ENCODE measurements at regions of chr6 and their contacts with region 1.

Region 1: GRCh38 chr6:143529095-143529494 is 17.6 kb upstream of the FUCA2 start:
- DNase-seq: no peak
- ATAC-seq: peak; percentile 47
- H3K4me3 ChIP-seq: no peak overlapping the region
- H3K4me3 Mint-ChIP-seq: peak overlapping the region in 1 of 10 donors; percentile 16
- H3K27ac ChIP-seq: no peak overlapping the region
- H3K27ac Mint-ChIP-seq: peak overlapping the region; percentile 44 to 95 (median 92)
- H3K4me1 ChIP-seq: peaks cover 14 to 15% of the 10 kb centered on the region in 2 donors
- H3K4me1 Mint-ChIP-seq: peaks cover 13 to 19% (median 15%) of the 10 kb centered on the region in 7 donors
- H3K27me3 ChIP-seq: no peaks in the 10 kb centered on the region
- H3K27me3 Mint-ChIP-seq: no peaks in the 10 kb centered on the region

Region 2: DNA sequence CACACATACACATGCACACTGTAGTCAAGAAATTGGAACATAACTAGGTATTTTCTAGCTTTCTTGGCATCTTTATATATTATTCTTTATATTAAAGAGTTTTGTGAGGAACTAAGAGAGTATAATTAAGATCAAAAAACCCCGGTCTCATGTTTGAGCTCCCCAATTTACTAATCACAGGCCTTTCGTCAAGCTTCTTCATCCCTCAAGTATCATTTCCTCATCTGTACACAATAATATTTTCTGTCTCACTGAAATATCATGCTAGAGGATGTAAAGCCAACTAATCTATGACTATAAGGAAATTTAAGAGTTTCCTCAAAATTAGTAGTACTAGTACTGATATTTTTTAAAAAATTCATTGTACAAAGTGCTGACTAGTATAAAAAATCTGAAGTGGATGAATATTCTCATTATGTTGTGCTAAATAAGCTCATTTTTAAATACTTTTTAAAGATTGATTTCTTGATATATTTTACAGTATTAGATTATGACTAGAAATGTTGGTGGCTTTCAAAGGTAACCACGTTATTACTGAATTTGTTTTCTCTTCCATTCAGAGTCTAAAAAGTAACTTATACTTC is 50.5 kb before region 1 on chr6:
- CTCF ChIA-PET with region 1: no interaction called
- POLR2A ChIA-PET with region 1: no interaction called
- intact Hi-C with region 1: no loop called
- DNase-seq: no peak
- ATAC-seq: no peak
- H3K4me3 ChIP-seq: no peak overlapping the region
- H3K4me3 Mint-ChIP-seq: no peak overlapping the region
- H3K27ac ChIP-seq: no peak overlapping the region
- H3K27ac Mint-ChIP-seq: no peak overlapping the region
- H3K4me1 ChIP-seq: no peaks in the 10 kb centered on the region
- H3K4me1 Mint-ChIP-seq: no peaks in the 10 kb centered on the region
- H3K27me3 ChIP-seq: no peaks in the 10 kb centered on the region
- H3K27me3 Mint-ChIP-seq: no peaks in the 10 kb centered on the region

Region 3: DNA sequence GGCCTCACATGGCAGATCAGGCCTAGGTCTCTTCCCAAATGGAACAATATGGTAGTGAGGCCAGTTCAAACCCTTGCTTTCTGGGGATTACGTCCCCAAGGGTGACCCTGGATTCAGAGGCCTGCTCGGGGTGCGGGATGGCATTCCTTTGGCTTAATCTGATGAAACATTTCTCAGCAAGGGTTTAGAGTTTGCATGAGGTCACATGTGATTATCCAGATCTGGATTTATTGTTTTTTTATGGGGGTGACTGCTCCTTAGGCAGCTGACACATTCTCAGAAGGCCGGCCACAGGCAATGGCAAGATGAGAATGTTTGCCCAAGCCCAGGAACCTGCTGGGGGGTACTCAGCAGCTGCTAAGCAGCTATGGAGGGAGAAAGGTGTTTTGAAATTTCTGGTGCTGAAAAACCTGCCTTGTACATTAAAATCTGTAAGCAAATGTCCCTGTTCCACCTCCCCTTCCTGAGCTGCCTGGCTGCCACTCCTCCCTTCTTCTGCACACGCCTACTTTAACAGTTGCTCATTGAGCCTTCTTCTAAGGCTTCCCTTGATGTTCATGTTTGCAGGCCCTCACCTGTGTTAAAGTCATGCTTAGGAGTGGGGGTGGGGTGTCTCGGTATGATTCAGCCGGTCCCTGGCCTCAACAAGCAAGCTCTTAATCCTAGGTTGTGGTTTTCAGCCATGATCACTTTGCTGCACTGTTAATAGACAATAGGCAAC is 20.3 kb after region 1 on chr6:
- CTCF ChIA-PET with region 1: interaction called, 3 read pairs
- POLR2A ChIA-PET with region 1: no interaction called
- intact Hi-C with region 1: loop called in 1 of 2 experiments (anchors 2 kb)
- DNase-seq: peak in 1 of 9 donors; percentile 45
- ATAC-seq: peak; percentile 47
- H3K4me3 ChIP-seq: no peak overlapping the region
- H3K4me3 Mint-ChIP-seq: peak overlapping the region in 3 of 10 donors; percentile 4 to 43 (median 10)
- H3K27ac ChIP-seq: no peak overlapping the region
- H3K27ac Mint-ChIP-seq: peak overlapping the region in 4 of 9 donors; percentile 20 to 66 (median 66)
- H3K4me1 ChIP-seq: peaks cover 43 to 71% of the 10 kb centered on the region in 2 donors
- H3K4me1 Mint-ChIP-seq: peaks cover 37 to 86% (median 73%) of the 10 kb centered on the region in 7 donors
- H3K27me3 ChIP-seq: no peaks in the 10 kb centered on the region
- H3K27me3 Mint-ChIP-seq: no peaks in the 10 kb centered on the region

Region 4: GRCh38 chr6:144013486-144013909 is 484.4 kb after region 1 on chr6:
- CTCF ChIA-PET with region 1: no interaction called
- POLR2A ChIA-PET with region 1: no interaction called
- intact Hi-C with region 1: loop called in 1 of 2 experiments (anchors 1 kb)
- DNase-seq: peak; percentile 18 to 58 (median 45)
- ATAC-seq: peak; percentile 54
- H3K4me3 ChIP-seq: no peak overlapping the region
- H3K4me3 Mint-ChIP-seq: no peak overlapping the region
- H3K27ac ChIP-seq: no peak overlapping the region
- H3K27ac Mint-ChIP-seq: peak overlapping the region in 1 of 9 donors; percentile 9
- H3K4me1 ChIP-seq: no peaks in the 10 kb centered on the region
- H3K4me1 Mint-ChIP-seq: peaks cover 0 to 4% (median 0%) of the 10 kb centered on the region in 7 donors
- H3K27me3 ChIP-seq: peaks cover 0 to 6% of the 10 kb centered on the region in 2 donors
- H3K27me3 Mint-ChIP-seq: peaks cover 11 to 45% (median 28%) of the 10 kb centered on the region in 5 donors

Measured in naive thymus-derived CD4-positive, alpha-beta T cell (primary cell).